ENCODE measurements at regions of chr18 and their contacts with region 1.

Region 1: GRCh38 chr18:3771121-3771971 is 321.4 kb downstream of the TGIF1 start:
- DNase-seq: no peak
- ATAC-seq: peak; percentile 99
- H3K4me3 ChIP-seq: no peak overlapping the region
- H3K27ac ChIP-seq: no peak overlapping the region
- H3K4me1 ChIP-seq: no peaks in the 10 kb centered on the region
- H3K27me3 ChIP-seq: no peaks in the 10 kb centered on the region
- CTCF ChIP-seq: peak; percentile 79 to 87 (median 87)
- EP300 ChIP-seq: no peak
- POLR2A ChIP-seq: no peak
- RAD21 ChIP-seq: peak; percentile 72

Region 2: GRCh38 chr18:3703732-3704176 is 67.6 kb before region 1 on chr18:
- CTCF ChIA-PET with region 1: interaction called, 13 read pairs
- POLR2A ChIA-PET with region 1: interaction called, 3 read pairs
- RAD21 ChIA-PET with region 1: interaction called, 6 read pairs
- SMC1A ChIA-PET with region 1: interaction called, 8 read pairs
- in situ Hi-C with region 1: no loop called
- intact Hi-C with region 1: no loop called
- DNase-seq: no peak
- ATAC-seq: peak; percentile 79
- H3K4me3 ChIP-seq: no peak overlapping the region
- H3K27ac ChIP-seq: no peak overlapping the region
- H3K4me1 ChIP-seq: no peaks in the 10 kb centered on the region
- H3K27me3 ChIP-seq: no peaks in the 10 kb centered on the region
- CTCF ChIP-seq: peak; percentile 60 to 74 (median 61)
- EP300 ChIP-seq: no peak
- POLR2A ChIP-seq: no peak
- RAD21 ChIP-seq: peak; percentile 55

Region 3: GRCh38 chr18:3782901-3783300 is 11.6 kb after region 1 on chr18:
- CTCF ChIA-PET with region 1: interaction called, 18 read pairs
- POLR2A ChIA-PET with region 1: no interaction called
- RAD21 ChIA-PET with region 1: interaction called, 9 read pairs
- SMC1A ChIA-PET with region 1: interaction called, 7 read pairs
- in situ Hi-C with region 1: no loop called
- intact Hi-C with region 1: no loop called
- DNase-seq: no peak
- ATAC-seq: no peak
- H3K4me3 ChIP-seq: no peak overlapping the region
- H3K27ac ChIP-seq: no peak overlapping the region
- H3K4me1 ChIP-seq: no peaks in the 10 kb centered on the region
- H3K27me3 ChIP-seq: no peaks in the 10 kb centered on the region
- CTCF ChIP-seq: no peak
- EP300 ChIP-seq: no peak
- POLR2A ChIP-seq: no peak
- RAD21 ChIP-seq: no peak

Region 4: DNA sequence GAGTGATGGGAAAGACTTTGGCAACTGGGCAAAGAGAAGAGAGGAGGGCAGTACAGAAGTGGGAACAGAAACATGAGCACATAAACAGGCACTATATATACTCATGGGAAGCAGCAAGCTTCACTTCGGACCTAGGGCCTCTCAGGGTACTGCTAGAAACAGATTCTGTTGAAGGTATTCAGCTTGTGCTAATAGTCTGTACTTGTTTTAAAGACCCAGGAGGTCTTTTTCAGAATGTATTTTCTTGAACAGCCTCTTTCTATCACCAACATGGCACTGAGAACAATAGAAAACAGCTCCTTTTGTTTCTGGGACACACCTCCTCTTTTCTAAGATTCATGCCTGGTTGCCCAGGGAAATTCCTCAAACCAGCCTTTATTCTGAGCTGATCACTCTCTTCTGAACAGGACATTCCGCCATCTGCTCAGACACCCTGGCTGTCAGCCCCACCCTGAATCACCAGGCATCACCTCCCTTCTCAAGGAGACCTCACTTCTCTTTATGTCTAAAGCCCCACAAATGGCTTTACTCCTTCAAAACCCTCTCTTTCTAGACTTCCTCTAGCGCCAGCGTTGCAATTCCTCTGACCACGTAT is 68.2 kb after region 1 on chr18:
- CTCF ChIA-PET with region 1: interaction called, 11 read pairs
- POLR2A ChIA-PET with region 1: no interaction called
- RAD21 ChIA-PET with region 1: interaction called, 15 read pairs
- SMC1A ChIA-PET with region 1: interaction called, 12 read pairs
- in situ Hi-C with region 1: no loop called
- intact Hi-C with region 1: no loop called
- DNase-seq: no peak
- ATAC-seq: peak; percentile 44
- H3K4me3 ChIP-seq: no peak overlapping the region
- H3K27ac ChIP-seq: no peak overlapping the region
- H3K4me1 ChIP-seq: no peaks in the 10 kb centered on the region
- H3K27me3 ChIP-seq: no peaks in the 10 kb centered on the region
- CTCF ChIP-seq: no peak
- EP300 ChIP-seq: no peak
- POLR2A ChIP-seq: no peak
- RAD21 ChIP-seq: no peak

Region 5: DNA sequence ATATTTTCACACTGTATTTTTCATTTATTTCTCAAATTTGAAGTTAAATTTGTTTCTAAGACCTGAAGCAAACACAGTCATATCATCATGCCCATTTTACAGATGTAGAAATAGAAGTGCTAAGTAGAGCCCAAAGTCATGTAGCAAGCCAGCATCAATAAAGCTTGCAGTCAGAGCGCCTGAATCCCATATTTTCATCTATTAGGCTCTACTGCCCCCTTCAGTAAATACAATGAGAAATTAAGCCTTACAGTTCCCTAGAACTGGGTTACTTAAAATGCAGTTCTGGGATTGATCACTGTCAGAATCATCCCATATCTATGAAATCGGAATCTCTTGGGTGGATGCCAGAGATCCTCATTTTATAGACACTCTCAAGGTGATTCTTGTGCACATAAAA is 98.5 kb after region 1 on chr18:
- CTCF ChIA-PET with region 1: interaction called, 64 read pairs
- POLR2A ChIA-PET with region 1: no interaction called
- RAD21 ChIA-PET with region 1: interaction called, 33 read pairs
- SMC1A ChIA-PET with region 1: interaction called, 33 read pairs
- in situ Hi-C with region 1: no loop called
- intact Hi-C with region 1: loop called (anchors 2 kb)
- DNase-seq: no peak
- ATAC-seq: peak; percentile 44; the same call in 2 of the 3 replicates
- H3K4me3 ChIP-seq: no peak overlapping the region
- H3K27ac ChIP-seq: no peak overlapping the region
- H3K4me1 ChIP-seq: no peaks in the 10 kb centered on the region
- H3K27me3 ChIP-seq: no peaks in the 10 kb centered on the region
- CTCF ChIP-seq: peak in 1 of 3 experiments; percentile 33; a peak in 1 of 6 replicates
- EP300 ChIP-seq: no peak
- POLR2A ChIP-seq: no peak
- RAD21 ChIP-seq: peak; percentile 46

Region 6: GRCh38 chr18:3983351-3983969 is 212.1 kb after region 1 on chr18:
- CTCF ChIA-PET with region 1: interaction called, 10 read pairs
- POLR2A ChIA-PET with region 1: no interaction called
- RAD21 ChIA-PET with region 1: interaction called, 18 read pairs
- SMC1A ChIA-PET with region 1: interaction called, 16 read pairs
- in situ Hi-C with region 1: no loop called
- intact Hi-C with region 1: no loop called
- DNase-seq: no peak
- ATAC-seq: peak; percentile 11; the same call in 1 of the 3 replicates
- H3K4me3 ChIP-seq: no peak overlapping the region
- H3K27ac ChIP-seq: no peak overlapping the region
- H3K4me1 ChIP-seq: no peaks in the 10 kb centered on the region
- H3K27me3 ChIP-seq: no peaks in the 10 kb centered on the region
- CTCF ChIP-seq: no peak
- EP300 ChIP-seq: no peak
- POLR2A ChIP-seq: no peak
- RAD21 ChIP-seq: no peak

Region 7: DNA sequence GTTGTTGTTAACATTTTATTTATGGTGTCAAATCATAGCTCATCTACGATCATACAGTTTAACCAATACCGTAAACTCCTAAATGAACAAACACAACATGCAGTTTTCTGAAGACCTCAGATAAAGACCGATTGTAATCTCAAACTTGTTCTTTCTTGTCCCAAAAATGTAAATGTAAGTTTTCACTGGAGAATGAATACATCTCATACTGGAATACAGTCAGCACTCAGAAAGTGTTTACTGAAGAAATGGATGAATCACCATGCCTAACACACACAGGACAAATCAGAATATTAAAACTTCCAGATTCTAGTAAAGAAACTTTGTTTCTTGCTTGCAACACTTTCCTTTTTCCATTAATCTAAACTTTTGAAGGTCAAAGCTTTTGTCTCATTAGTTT is 303.3 kb after region 1 on chr18:
- CTCF ChIA-PET with region 1: interaction called, 5 read pairs
- POLR2A ChIA-PET with region 1: no interaction called
- RAD21 ChIA-PET with region 1: interaction called, 5 read pairs
- SMC1A ChIA-PET with region 1: interaction called, 10 read pairs
- in situ Hi-C with region 1: no loop called
- intact Hi-C with region 1: loop called (anchors 5 kb)
- DNase-seq: no peak
- ATAC-seq: no peak
- H3K4me3 ChIP-seq: no peak overlapping the region
- H3K27ac ChIP-seq: no peak overlapping the region
- H3K4me1 ChIP-seq: no peaks in the 10 kb centered on the region
- H3K27me3 ChIP-seq: no peaks in the 10 kb centered on the region
- CTCF ChIP-seq: no peak
- EP300 ChIP-seq: no peak
- POLR2A ChIP-seq: no peak
- RAD21 ChIP-seq: no peak